AG04449 (cell line): ENCODE measurements at regions of chr6 and their contacts with region 1.

Region 1: DNA sequence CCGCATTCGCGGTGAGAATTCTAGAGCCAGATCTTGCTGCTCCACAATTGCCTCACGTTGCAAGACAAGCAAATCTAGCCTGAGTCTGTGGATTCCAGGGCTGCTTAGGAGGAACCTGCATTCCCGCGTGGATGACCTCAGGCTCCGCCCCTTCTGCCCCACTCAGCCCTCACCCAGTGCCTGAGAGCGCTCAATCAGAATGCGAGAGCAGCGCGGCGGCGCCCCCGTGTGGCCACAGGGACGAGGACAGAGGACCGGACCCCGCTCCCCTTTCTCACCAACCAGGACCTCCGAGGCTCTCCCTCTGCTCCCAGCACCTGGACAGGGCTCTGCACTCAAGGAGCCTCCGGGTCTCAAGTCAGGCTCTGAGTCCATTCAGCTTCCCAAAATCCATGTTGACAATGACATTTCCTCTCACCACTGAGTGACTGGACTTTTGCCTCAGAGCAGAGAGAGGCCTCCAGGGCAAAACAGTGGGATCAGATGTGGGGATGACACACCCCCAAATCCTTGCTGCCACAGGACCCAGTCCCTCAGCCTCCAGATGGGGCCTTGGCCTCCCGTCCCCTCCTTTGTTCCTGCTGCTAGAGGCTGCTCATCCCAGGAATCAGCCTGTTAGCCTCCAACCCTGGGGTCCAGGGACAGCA is 52.0 kb downstream of the RPP21 start:
- DNase-seq: no peak
- H3K4me3 ChIP-seq: no peak overlapping the region
- CTCF ChIP-seq: peak; percentile 94

Region 2: GRCh38 chr6:30184417-30185031 is 212.4 kb before region 1 on chr6:
- CTCF ChIA-PET with region 1: no interaction called
- POLR2A ChIA-PET with region 1: no interaction called
- DNase-seq: no peak
- H3K4me3 ChIP-seq: no peak overlapping the region
- CTCF ChIP-seq: no peak

Region 3: DNA sequence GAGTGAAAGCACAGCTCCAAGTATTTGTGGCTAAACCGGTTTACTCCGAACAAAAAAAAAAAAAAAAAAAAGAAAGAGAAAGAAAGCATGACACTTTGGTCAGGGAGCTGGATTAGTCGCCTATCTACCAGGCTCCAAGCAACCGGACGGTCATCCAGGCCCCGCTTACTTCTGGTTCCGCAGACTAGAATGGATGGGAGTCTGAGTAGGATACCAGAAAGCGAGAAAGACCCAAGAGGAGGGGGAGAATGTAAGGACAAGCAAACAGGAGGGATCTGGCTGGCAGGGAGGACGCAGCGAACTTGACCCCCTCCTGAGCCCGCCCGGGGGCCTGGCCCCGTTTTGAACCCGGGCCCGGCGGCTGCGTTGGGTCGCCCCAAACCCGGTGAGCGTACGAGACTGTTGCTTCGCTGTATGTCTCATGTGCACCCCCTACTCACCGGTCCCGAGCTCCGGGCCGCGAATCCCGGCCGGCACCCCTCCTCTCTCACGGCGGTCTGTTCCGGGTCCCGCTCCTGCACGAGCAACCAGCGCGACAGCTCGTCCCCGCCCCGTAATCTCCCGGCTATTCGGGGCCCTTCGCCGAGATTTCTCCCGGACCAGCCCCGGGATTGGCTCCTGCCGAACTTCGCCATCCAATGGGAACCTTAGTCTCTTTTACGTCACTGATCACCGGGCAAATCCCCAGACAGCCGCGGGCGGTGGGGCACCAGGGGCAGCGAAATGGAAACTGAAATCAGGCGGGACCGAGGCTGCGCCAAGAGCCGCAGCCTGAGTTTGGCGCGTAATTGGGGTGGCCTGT is 183.9 kb before region 1 on chr6 and contains the start of gene TRIM26:
- CTCF ChIA-PET with region 1: interaction called, 47 read pairs
- POLR2A ChIA-PET with region 1: no interaction called
- DNase-seq: peak; percentile 67
- H3K4me3 ChIP-seq: peak within 1 kb of the TSS; percentile 91
- CTCF ChIP-seq: no peak

Region 4: GRCh38 chr6:30219244-30219643 is 177.7 kb before region 1 on chr6:
- CTCF ChIA-PET with region 1: interaction called, 47 read pairs
- POLR2A ChIA-PET with region 1: no interaction called
- DNase-seq: no peak
- H3K4me3 ChIP-seq: no peak overlapping the region
- CTCF ChIP-seq: peak; percentile 75

Region 5: GRCh38 chr6:30238174-30238795 is 158.7 kb before region 1 on chr6:
- CTCF ChIA-PET with region 1: interaction called, 23 read pairs
- POLR2A ChIA-PET with region 1: no interaction called
- DNase-seq: no peak
- H3K4me3 ChIP-seq: no peak overlapping the region
- CTCF ChIP-seq: peak; percentile 33

Region 6: DNA sequence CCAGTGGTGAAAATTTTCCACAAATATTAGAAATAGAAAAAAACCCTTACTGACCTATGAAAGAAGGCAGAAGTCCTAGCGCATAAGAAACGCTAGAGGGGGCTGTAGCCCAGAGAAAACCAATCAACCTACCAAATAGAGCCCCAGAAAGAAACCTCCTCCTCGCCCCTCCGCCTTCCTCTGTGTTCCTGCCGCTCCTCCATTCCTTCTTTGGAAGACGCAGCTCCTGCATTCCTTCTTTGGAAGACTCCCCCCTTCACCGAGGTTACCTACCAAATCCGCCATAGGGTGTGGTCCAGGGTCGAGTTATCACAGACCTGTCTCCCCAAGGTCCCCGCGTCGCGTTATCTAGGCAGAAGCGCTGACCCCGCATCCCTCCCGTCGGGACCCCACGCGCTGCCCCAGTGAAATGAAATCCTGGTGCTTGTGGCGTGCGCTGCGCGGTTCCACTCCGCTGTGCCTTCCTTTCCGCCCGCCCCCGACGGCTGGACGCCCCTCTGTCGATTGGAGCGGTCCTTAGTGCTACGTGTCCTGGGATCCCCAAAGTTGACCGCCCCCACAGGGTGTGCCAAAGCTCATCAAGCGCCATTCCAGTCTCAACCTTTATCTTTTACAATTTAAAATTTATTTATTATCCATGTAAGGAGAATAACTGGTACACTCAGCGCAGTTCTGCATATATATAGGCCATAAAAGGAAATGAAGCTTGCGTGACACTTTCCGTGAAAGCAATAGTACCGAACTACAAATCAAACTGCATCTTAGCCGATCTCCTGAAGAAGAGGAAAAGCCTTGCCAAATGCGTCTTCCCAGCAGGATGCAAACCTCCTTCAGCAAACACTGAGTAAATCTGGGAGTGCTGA is 39.0 kb before region 1 on chr6:
- CTCF ChIA-PET with region 1: interaction called, 32 read pairs
- POLR2A ChIA-PET with region 1: no interaction called
- DNase-seq: peak; percentile 17
- H3K4me3 ChIP-seq: peak overlapping the region; percentile 57
- CTCF ChIP-seq: peak; percentile 47